Endothelial cell of umbilical vein (primary cell): ENCODE measurements at regions of chr3 and their contacts with region 1.

Region 1: GRCh38 chr3:184362668-184363540 is 1.4 kb downstream of the POLR2H start:
- DNase-seq: peak; percentile 96
- H3K4me3 ChIP-seq: peak overlapping the region; percentile 38 to 87 (median 59)
- H3K27ac ChIP-seq: peak overlapping the region; percentile 86
- H3K4me1 ChIP-seq: peaks cover 17% of the 10 kb centered on the region
- H3K27me3 ChIP-seq: no peaks in the 10 kb centered on the region
- CTCF ChIP-seq: peak; percentile 55 to 71
- POLR2A ChIP-seq: peak; percentile 87

Region 2: GRCh38 chr3:184298759-184299496 is 64.0 kb before region 1 on chr3 and contains the start of gene PSMD2:
- CTCF ChIA-PET with region 1: no interaction called
- POLR2A ChIA-PET with region 1: no interaction called
- dilution Hi-C with region 1: no loop called
- intact Hi-C with region 1: loop called (anchors 2 kb)
- DNase-seq: peak; percentile 96
- H3K4me3 ChIP-seq: peak within 1 kb of the TSS; percentile 71 to 89 (median 88)
- H3K27ac ChIP-seq: peak within 1 kb of the TSS; percentile 70
- H3K4me1 ChIP-seq: peaks cover 13% of the 10 kb centered on the region
- H3K27me3 ChIP-seq: peaks cover 0 to 3% of the 10 kb centered on the region in 2 experiments
- CTCF ChIP-seq: no peak
- POLR2A ChIP-seq: peak; percentile 85
- total RNA-seq, gene PSMD2: 400 and 435 TPM in 2 replicates

Region 3: GRCh38 chr3:184314363-184314699 is 48.6 kb before region 1 on chr3 and contains the start of gene EIF4G1:
- CTCF ChIA-PET with region 1: no interaction called
- POLR2A ChIA-PET with region 1: interaction called, 7 read pairs
- dilution Hi-C with region 1: no loop called
- intact Hi-C with region 1: loop called (anchors 1 kb)
- DNase-seq: peak; percentile 94
- H3K4me3 ChIP-seq: peak within 1 kb of the TSS; percentile 37 to 84 (median 59)
- H3K27ac ChIP-seq: peak within 1 kb of the TSS; percentile 64
- H3K4me1 ChIP-seq: peaks cover 28% of the 10 kb centered on the region
- H3K27me3 ChIP-seq: no peaks in the 10 kb centered on the region
- CTCF ChIP-seq: no peak
- POLR2A ChIP-seq: peak; percentile 79
- total RNA-seq, gene EIF4G1: 524 and 532 TPM in 2 replicates

Region 4: GRCh38 chr3:184479426-184480126 is 116.7 kb after region 1 on chr3:
- CTCF ChIA-PET with region 1: no interaction called
- POLR2A ChIA-PET with region 1: no interaction called
- dilution Hi-C with region 1: no loop called
- intact Hi-C with region 1: no loop called
- DNase-seq: no peak
- H3K4me3 ChIP-seq: no peak overlapping the region
- H3K27ac ChIP-seq: no peak overlapping the region
- H3K4me1 ChIP-seq: no peaks in the 10 kb centered on the region
- H3K27me3 ChIP-seq: peaks cover 12 to 29% of the 10 kb centered on the region in 2 experiments
- CTCF ChIP-seq: no peak
- POLR2A ChIP-seq: no peak